WTC11 (cell line): ENCODE measurements at regions of chr13 and their contacts with region 1.

Region 1: GRCh38 chr13:99955747-99956472 is 15.7 kb downstream of the ZIC5 start:
- DNase-seq: peak; percentile 57
- ATAC-seq: peak; percentile 1; the same call in 1 of the 2 replicates
- H3K4me3 Mint-ChIP-seq: peak overlapping the region; percentile 87
- H3K27ac Mint-ChIP-seq: no peak overlapping the region
- H3K4me1 Mint-ChIP-seq: peaks cover 57% of the 10 kb centered on the region
- H3K27me3 Mint-ChIP-seq: peaks cover 69% of the 10 kb centered on the region
- CTCF ChIP-seq: no peak

Region 2: DNA sequence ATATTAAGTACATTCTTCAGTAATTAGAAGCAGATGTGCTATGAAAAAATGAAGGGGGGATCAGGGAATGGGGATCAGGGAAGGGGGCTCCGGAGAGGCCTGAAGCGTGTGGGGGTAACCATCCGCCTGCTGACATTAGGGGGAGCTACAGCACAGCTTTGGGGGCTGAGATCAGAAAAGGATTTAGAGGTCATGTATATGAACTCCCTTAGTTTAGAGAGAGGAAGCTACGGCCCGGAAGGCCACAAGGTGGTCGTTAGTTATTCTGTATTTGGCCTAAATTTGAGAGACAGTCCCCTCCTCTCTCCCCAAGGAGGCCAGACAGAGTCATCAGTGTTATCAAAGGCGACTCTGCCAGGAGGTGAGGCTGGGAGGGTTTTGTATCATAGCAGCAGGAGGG is 355.6 kb before region 1 on chr13:
- CTCF ChIA-PET with region 1: interaction called, 15 read pairs
- POLR2A ChIA-PET with region 1: no interaction called
- DNase-seq: peak; percentile 77
- ATAC-seq: peak; percentile 99
- H3K4me3 Mint-ChIP-seq: no peak overlapping the region
- H3K27ac Mint-ChIP-seq: no peak overlapping the region
- H3K4me1 Mint-ChIP-seq: peaks cover 19% of the 10 kb centered on the region
- H3K27me3 Mint-ChIP-seq: no peaks in the 10 kb centered on the region
- CTCF ChIP-seq: peak; percentile 45; the same call in 1 of the 2 replicates

Region 3: DNA sequence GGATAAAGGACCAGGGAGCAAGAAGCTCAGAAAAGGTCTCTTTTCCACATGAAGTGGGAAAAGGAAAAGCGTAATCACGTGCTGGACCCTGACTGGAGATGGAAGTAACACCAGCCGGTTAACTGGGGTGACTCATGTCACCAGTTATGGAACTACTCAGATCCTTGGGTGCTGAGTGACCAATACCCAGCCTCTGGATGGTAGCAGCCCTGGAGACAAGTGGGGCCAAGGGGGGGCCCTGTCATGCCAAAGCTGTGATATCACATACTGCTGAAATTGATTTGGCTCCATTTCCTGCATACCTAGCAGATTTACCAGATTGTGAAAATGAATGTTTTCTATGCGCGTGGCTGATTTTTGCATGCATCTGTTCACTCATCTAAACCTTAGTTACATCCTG is 143.3 kb before region 1 on chr13:
- CTCF ChIA-PET with region 1: no interaction called
- POLR2A ChIA-PET with region 1: no interaction called
- DNase-seq: no peak
- ATAC-seq: no peak
- H3K4me3 Mint-ChIP-seq: no peak overlapping the region
- H3K27ac Mint-ChIP-seq: no peak overlapping the region
- H3K4me1 Mint-ChIP-seq: peaks cover 8% of the 10 kb centered on the region
- H3K27me3 Mint-ChIP-seq: no peaks in the 10 kb centered on the region
- CTCF ChIP-seq: no peak

Region 4: DNA sequence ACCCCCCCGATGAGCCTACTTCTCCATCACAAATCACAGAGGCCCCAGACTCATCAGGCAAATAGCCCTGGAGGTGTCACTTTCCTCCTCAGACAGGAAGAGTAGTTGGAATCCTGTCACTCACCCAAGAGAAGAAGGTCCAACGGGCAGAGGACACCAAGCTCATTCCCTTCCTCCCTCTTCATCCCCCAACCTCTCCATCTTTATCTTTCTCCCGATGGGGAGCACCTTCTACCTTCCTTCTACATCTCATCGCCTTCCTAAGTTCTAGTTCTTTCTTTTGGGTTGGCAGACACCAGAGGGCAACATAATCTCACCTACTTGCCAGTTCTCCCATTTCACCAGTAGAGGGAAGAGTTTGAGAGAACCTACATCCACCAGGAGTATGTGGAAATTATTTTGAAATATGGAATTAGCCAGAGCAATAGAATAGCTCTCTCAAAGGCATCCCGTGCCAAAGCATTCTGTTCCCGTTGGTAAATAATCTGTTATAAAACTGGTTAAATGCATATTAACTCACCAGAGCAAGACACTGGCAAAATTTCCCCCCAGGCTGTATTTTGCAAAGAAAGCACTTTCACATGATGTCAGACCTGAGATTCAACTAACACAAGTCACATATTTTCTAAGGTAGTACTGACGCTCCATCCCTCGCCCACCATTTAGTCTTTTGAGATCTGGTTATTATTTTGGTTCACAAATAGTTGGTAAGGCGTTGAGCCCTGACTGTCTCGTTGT is 39.4 kb before region 1 on chr13:
- CTCF ChIA-PET with region 1: interaction called, 12 read pairs
- POLR2A ChIA-PET with region 1: interaction called, 3 read pairs
- DNase-seq: no peak
- ATAC-seq: peak; percentile 88
- H3K4me3 Mint-ChIP-seq: no peak overlapping the region
- H3K27ac Mint-ChIP-seq: no peak overlapping the region
- H3K4me1 Mint-ChIP-seq: peaks cover 31% of the 10 kb centered on the region
- H3K27me3 Mint-ChIP-seq: no peaks in the 10 kb centered on the region; the same call in 1 of the 2 replicates
- CTCF ChIP-seq: peak; percentile 51

Region 5: GRCh38 chr13:99941086-99941485 is 14.8 kb before region 1 on chr13:
- CTCF ChIA-PET with region 1: interaction called, 18 read pairs
- POLR2A ChIA-PET with region 1: interaction called, 3 read pairs
- DNase-seq: no peak
- ATAC-seq: no peak
- H3K4me3 Mint-ChIP-seq: no peak overlapping the region
- H3K27ac Mint-ChIP-seq: no peak overlapping the region
- H3K4me1 Mint-ChIP-seq: peaks cover 10% of the 10 kb centered on the region
- H3K27me3 Mint-ChIP-seq: no peaks in the 10 kb centered on the region; the same call in 1 of the 2 replicates
- CTCF ChIP-seq: no peak

Region 6: GRCh38 chr13:99990126-99990977 is 34.4 kb after region 1 on chr13:
- CTCF ChIA-PET with region 1: interaction called, 7 read pairs
- POLR2A ChIA-PET with region 1: interaction called, 10 read pairs
- DNase-seq: peak; percentile 66
- ATAC-seq: peak; percentile 1
- H3K4me3 Mint-ChIP-seq: peak overlapping the region; percentile 71
- H3K27ac Mint-ChIP-seq: no peak overlapping the region; the same call in 1 of the 2 replicates
- H3K4me1 Mint-ChIP-seq: peaks cover 85% of the 10 kb centered on the region
- H3K27me3 Mint-ChIP-seq: peaks cover 74% of the 10 kb centered on the region
- CTCF ChIP-seq: no peak